ENCODE measurements at regions of chr6 and their contacts with region 1.

Region 1: DNA sequence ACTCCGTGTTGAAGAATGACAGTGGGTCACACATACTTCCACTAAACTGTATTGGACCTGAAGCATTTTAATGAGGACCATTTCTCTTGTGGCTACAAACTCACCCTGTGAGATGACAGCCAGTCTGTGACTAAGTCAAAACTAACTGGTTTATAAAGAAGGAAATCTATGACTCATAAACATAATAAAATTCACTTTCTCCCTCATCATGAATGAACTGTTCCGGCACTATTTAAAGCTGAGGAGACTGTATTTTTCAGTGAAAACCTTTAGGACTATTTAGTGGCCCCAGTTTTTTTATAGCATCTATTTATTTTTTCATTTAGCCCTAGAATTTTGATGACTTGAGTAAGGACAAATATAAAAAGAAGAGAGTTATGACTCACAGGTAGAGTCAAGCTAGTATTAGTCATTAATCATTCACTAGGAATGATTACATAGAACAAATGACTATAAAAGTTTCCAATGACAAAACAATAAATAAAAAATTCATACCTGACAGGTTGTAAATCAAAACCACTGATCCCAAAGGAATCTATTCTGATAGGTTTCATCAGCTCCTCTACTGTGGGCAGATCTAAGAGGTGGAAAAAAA is 34.2 kb downstream of the CEP162 start:
- DNase-seq: no peak
- H3K4me3 ChIP-seq: no peak overlapping the region
- H3K27ac ChIP-seq: peak overlapping the region; percentile 66 to 69
- H3K4me1 ChIP-seq: peaks cover 0 to 6% of the 10 kb centered on the region in 2 donors
- H3K27me3 ChIP-seq: no peaks in the 10 kb centered on the region
- CTCF ChIP-seq: no peak

Region 2: DNA sequence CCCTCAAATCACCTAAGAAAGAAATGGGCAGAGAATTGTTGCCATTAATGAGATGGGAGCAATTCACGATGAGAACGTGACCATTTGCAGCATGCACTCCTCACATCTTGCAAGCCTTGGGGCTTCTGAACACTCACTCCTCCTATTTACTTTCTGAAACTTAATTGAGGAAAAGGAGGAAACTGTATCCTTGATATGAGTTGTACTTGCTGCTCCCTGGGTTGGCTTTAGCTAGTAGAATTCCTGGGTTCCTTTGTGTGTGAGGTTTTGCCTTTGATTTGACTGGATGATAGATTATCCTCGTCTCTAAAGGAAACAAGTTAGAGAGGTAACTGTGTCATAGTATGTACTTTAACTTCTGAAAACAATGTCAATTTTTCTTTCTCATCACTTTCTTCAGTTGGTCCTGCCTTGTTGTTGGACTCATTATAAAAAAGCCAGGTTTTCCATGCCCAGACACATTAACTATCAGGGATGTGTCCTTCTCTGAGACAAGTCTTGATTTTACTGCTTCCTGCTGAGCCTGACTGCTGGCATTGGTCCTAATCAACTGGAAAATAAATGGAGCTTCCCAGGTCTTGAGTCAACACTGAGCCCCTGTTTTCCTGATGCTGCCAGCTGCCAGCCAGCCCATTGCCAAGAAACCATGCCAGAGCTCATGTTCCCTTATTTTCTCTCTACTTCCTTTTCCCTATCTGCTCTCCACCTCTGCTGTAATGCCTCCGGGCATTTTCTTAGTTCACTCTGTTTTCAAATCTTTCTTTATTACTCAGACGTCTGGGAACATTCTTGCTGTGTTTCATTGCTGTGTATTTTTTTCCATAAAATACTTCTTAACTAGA is 165.7 kb before region 1 on chr6:
- intact Hi-C with region 1: loop called (anchors 2 kb)
- DNase-seq: peak in 1 of 2 donors; percentile 89
- H3K4me3 ChIP-seq: peak overlapping the region in 1 of 2 donors; percentile 28
- H3K27ac ChIP-seq: peak overlapping the region; percentile 96 to 97
- H3K4me1 ChIP-seq: peaks cover 0 to 44% of the 10 kb centered on the region in 2 donors
- H3K27me3 ChIP-seq: no peaks in the 10 kb centered on the region
- CTCF ChIP-seq: no peak

Region 3: DNA sequence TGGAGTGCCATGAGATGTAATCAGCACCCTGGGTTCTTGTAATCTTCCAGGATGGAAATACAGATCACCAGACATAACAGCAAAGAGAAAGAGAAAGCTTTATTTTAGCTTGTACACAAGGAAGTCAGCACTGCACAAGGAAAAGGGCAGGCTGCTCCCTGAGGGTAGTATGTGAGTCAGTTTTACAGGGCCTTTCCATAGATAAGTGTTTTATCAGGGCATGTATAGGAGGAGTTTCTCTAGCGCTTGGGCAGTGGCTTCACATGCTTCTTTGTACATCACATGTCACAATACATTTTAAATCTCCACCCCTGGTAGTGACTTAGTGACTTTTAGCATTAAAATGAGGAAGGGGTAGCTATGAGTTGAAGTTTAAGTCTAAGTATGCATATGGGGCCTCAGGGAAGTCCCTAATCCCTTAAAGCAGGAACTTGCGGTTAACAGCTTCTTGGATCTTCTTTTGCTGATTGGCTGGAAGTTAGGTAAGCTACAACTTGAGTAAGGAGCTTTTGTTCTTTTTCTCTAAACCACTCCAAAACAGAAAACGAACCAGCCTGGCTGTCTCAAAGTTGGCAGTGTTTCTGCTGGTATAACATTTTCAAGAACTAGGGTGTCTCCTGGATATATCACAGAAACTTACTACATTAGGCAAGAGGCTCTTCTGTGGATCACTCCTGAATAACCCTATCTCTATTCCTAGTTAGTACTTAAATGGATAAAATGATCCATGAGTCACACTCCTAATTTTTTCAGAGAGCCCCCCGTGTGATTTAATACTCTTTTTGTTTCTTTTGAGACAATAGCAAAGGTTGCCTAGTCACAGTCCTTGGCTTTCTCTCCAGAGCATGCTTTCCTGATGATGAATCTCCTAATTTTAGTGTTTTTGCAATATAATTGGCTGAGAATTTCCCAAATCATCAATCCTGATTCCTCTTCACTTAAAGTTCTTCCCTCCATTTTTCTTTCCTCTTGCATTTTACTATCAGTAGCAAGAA is 99.5 kb before region 1 on chr6:
- intact Hi-C with region 1: loop called (anchors 2 kb)
- DNase-seq: no peak
- H3K4me3 ChIP-seq: no peak overlapping the region
- H3K27ac ChIP-seq: peak overlapping the region; percentile 45 to 63
- H3K4me1 ChIP-seq: peaks cover 2 to 21% of the 10 kb centered on the region in 2 donors
- H3K27me3 ChIP-seq: no peaks in the 10 kb centered on the region
- CTCF ChIP-seq: no peak